ENCODE measurements at regions of chr9 and their contacts with region 1.

Region 1: GRCh38 chr9:111597817-111598729 is 1.4 kb downstream of the PTGR1 start:
- DNase-seq: peak; percentile 60
- H3K4me3 Mint-ChIP-seq: peak overlapping the region; percentile 93
- H3K27ac Mint-ChIP-seq: peak overlapping the region; percentile 91
- H3K4me1 Mint-ChIP-seq: peaks cover 19% of the 10 kb centered on the region
- H3K27me3 Mint-ChIP-seq: no peaks in the 10 kb centered on the region
- CTCF ChIP-seq: peak; percentile 44

Region 2: GRCh38 chr9:110832926-110833325 is 765.1 kb before region 1 on chr9:
- CTCF ChIA-PET with region 1: interaction called, 12 read pairs
- intact Hi-C with region 1: no loop called
- DNase-seq: no peak
- H3K4me3 Mint-ChIP-seq: no peak overlapping the region
- H3K27ac Mint-ChIP-seq: no peak overlapping the region
- H3K4me1 Mint-ChIP-seq: peaks cover 26% of the 10 kb centered on the region
- H3K27me3 Mint-ChIP-seq: no peaks in the 10 kb centered on the region
- CTCF ChIP-seq: no peak

Region 3: GRCh38 chr9:111621895-111622480 is 23.9 kb after region 1 on chr9:
- CTCF ChIA-PET with region 1: interaction called, 43 read pairs
- intact Hi-C with region 1: loop called (anchors 1 kb)
- DNase-seq: peak; percentile 50
- H3K4me3 Mint-ChIP-seq: no peak overlapping the region
- H3K27ac Mint-ChIP-seq: no peak overlapping the region
- H3K4me1 Mint-ChIP-seq: no peaks in the 10 kb centered on the region
- H3K27me3 Mint-ChIP-seq: no peaks in the 10 kb centered on the region
- CTCF ChIP-seq: peak; percentile 54

Region 4: DNA sequence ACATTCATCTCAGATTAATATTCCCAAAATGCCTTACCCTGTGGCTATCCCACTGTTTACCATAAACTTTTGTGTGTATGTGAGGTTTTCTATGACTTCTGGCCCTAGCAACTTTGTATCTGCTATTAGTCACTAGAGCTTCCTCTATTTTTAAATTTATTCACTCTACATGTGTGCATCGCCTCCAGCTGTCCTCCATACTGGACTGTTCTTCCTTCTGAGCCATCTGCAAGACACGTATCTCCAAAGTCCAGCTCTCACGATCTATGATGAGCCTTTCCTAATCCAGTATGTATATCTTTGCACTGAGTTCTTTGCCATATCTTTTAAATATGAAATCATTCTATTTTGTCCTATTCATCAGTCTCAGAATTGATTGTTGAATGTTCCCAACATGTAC is 61.6 kb after region 1 on chr9:
- CTCF ChIA-PET with region 1: no interaction called
- intact Hi-C with region 1: loop called (anchors 2 kb)
- DNase-seq: no peak
- H3K4me3 Mint-ChIP-seq: no peak overlapping the region
- H3K27ac Mint-ChIP-seq: no peak overlapping the region
- H3K4me1 Mint-ChIP-seq: peaks cover 20% of the 10 kb centered on the region
- H3K27me3 Mint-ChIP-seq: no peaks in the 10 kb centered on the region
- CTCF ChIP-seq: no peak

Region 5: DNA sequence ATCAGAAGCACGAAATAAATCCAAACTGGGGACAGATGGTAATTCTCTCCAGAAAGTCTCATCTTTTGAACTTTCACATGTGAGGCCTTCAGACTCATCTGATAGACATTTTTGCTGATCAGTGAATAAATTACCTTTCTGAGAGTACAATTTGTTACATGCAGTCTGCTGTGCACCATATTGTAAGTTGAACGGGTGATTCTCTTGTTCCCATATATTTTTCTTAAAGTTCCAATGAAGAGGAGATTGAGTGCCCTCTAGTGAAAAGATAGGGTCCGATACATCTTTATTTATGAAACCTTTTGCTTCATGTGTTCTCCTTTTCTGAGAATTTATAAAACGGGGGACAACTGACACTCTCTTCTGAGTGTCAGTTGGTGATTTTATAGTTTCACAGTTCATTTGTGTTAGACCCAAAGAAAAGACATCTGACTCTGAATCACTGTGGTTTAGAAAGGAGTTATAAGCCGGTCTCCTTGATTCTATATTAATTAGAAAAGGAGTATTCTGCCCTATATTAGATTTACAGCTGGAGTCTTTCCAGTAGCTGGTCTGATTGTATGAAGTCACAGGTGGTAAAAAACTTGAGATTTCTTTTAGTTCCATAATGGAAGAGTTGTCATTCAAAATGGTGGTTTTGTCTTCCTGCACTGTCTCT is 93.7 kb after region 1 on chr9:
- CTCF ChIA-PET with region 1: no interaction called
- intact Hi-C with region 1: loop called (anchors 5 kb)
- DNase-seq: no peak
- H3K4me3 Mint-ChIP-seq: no peak overlapping the region
- H3K27ac Mint-ChIP-seq: no peak overlapping the region
- H3K4me1 Mint-ChIP-seq: no peaks in the 10 kb centered on the region
- H3K27me3 Mint-ChIP-seq: no peaks in the 10 kb centered on the region
- CTCF ChIP-seq: peak; percentile 33

Measured in Calu3 (cell line).